ENCODE measurements at regions of chr18 and their contacts with region 1.

Region 1: DNA sequence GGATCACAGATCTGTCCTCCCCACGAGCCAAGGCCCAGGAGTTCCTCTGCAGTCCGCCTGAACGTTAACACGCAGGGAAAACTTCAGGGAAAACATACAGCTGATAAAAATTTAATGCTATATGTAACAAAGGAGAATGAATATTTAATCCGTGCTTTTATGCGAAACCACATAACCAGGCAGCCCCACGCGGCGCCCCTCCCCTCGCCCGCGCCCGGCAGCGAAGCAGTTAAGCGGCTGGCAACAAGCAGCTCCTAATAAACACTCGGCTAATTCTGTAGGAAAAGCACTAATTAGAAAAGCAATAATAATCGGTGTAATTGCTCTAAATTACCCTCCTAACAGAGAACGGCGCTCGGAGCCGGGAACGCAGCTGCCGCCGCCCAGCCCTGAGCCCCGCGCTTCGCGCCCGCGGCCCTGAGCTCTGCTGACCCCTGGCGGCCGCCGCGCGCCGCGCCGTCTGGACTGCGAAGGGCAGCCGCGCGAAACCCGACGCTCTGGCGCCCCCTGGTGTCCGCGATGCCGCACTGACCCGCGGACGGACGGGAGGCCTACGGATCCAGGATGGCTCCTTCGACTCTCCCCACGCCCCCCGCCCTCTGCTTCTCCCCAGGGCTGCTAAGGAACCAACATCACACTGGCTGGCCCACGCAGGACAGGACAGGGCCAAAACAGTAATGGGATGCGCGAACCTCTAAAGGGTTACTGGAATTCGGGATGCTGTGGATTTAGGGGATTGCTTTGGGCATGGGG is 181.4 kb downstream of the SMAD2 start:
- DNase-seq: peak; percentile 75
- H3K4me3 ChIP-seq: no peak overlapping the region
- H3K27ac ChIP-seq: no peak overlapping the region
- H3K4me1 ChIP-seq: no peaks in the 10 kb centered on the region
- H3K27me3 ChIP-seq: no peaks in the 10 kb centered on the region
- CTCF ChIP-seq: peak; percentile 100

Region 2: GRCh38 chr18:47215554-47216138 is 533.4 kb before region 1 on chr18:
- intact Hi-C with region 1: loop called (anchors 5 kb)
- DNase-seq: no peak
- H3K4me3 ChIP-seq: no peak overlapping the region
- H3K27ac ChIP-seq: no peak overlapping the region
- H3K4me1 ChIP-seq: no peaks in the 10 kb centered on the region
- H3K27me3 ChIP-seq: no peaks in the 10 kb centered on the region
- CTCF ChIP-seq: peak; percentile 18

Region 3: DNA sequence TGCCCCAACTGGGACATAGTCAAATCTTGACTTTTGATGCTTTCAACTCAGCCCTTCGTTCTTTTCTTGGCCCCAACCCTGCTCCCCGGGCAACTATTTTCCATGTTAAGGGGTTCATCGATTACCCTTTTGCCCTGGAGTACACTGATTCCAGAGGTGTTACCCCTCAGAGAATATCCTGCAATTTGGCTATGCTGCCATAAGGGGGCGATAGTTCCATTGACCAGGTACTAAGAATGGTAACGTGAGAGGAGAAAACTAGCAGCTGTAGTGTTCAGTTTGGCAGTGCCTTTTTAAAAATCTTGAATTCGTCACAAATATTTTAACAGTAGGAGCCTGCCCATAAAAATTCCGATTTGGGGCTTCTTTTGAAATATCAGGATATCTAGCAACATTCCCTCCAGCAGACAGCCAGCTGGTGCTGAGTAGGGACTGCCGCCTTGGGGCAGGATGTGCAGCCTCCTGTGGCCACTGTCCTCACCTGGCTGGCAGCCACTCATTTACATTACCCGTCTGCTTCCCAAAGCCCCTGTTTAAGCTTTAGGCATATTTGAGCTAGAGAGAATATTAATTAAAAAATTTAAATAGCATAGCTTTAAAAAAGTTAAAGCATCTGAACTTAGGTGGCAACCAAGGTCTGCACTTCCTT is 351.2 kb before region 1 on chr18:
- intact Hi-C with region 1: loop called (anchors 5 kb)
- DNase-seq: peak; percentile 46
- H3K4me3 ChIP-seq: no peak overlapping the region
- H3K27ac ChIP-seq: no peak overlapping the region
- H3K4me1 ChIP-seq: no peaks in the 10 kb centered on the region
- H3K27me3 ChIP-seq: no peaks in the 10 kb centered on the region
- CTCF ChIP-seq: peak; percentile 42

Region 4: GRCh38 chr18:47595815-47596496 is 153.1 kb before region 1 on chr18:
- intact Hi-C with region 1: loop called (anchors 1 kb)
- DNase-seq: peak; percentile 61
- H3K4me3 ChIP-seq: no peak overlapping the region
- H3K27ac ChIP-seq: no peak overlapping the region
- H3K4me1 ChIP-seq: no peaks in the 10 kb centered on the region
- H3K27me3 ChIP-seq: no peaks in the 10 kb centered on the region
- CTCF ChIP-seq: peak; percentile 55

Region 5: DNA sequence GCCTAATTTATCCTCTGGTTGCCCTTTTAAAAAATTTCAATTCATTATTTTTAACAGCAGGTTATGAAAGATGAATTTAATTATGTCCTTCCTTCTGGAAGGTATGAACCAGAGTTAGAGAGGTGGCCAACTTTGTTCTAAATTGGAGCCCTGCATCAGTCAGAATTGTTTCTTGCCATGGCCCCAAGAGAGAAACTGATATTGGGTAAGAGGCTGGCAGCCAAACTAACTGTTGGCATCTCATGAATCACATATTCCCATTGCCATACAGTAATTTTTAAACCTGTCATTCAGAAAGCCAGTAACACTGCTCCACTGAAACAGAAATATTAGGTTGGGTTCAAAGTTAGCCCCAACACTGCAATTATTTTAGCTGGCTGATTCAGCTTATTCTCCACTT is 114.0 kb after region 1 on chr18:
- intact Hi-C with region 1: no loop called
- DNase-seq: no peak
- H3K4me3 ChIP-seq: no peak overlapping the region
- H3K27ac ChIP-seq: no peak overlapping the region
- H3K4me1 ChIP-seq: no peaks in the 10 kb centered on the region
- H3K27me3 ChIP-seq: no peaks in the 10 kb centered on the region
- CTCF ChIP-seq: no peak

Region 6: DNA sequence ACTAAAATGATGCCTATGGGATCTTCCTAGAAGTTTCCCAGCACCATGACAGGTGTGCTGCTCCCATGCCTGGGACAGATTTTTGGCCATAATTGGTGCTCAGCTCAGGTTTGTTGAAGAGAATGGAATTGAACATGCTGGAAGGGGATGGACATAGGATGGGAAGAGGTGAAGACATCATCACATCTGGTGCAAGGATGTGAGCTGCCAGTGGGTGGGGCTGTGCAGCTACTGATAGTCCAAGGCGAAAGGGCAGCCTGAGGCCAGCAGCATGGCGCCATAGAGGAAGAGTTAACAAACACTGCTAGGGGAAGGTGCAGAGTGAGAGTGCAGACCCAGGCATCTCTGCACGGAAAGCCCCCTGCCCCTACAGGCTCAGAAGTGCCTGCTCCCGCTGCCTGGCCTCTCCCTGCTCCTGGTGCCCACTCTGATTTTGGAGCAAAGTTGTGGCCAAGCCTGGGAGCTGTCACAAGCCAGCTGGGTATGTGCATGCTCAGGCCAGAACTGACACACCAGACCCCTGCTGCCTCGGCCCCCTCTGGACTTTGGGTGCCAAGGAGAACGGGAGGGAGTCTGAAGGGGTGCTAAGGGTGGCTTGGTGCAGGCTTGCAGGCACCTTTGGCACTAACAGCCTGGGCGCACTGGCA is 481.6 kb after region 1 on chr18:
- intact Hi-C with region 1: no loop called
- DNase-seq: peak; percentile 79
- H3K4me3 ChIP-seq: no peak overlapping the region
- H3K27ac ChIP-seq: no peak overlapping the region
- H3K4me1 ChIP-seq: no peaks in the 10 kb centered on the region
- H3K27me3 ChIP-seq: no peaks in the 10 kb centered on the region
- CTCF ChIP-seq: peak; percentile 61